ENCODE measurements at regions of chr10 and their contacts with region 1.

Region 1: DNA sequence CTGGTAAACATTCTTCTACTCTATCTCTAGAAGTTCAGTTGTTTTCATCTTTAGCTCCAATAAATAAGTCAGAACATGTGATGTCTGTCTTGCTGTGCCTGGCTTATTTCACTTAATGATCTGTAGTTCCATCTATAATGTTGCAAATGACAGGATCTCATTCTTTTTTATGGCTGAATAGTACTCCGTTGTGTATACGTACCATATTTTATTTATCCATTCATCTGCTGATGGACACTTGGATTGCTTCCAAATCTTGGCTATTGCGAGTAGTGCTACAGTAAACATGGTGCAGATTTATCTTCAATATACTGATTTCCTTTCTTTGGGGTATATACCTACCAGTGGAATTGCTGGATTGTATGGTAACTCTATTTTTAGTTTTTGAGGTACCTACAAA is 124.4 kb downstream of the ZNF33B start:
- DNase-seq: no peak
- ATAC-seq: no peak
- H3K4me3 Mint-ChIP-seq: no peak overlapping the region
- H3K27ac Mint-ChIP-seq: no peak overlapping the region
- H3K4me1 Mint-ChIP-seq: no peaks in the 10 kb centered on the region
- H3K27me3 Mint-ChIP-seq: no peaks in the 10 kb centered on the region

Region 2: GRCh38 chr10:42598249-42598873 is 84.4 kb after region 1 on chr10:
- CTCF ChIA-PET with region 1: no interaction called
- POLR2A ChIA-PET with region 1: no interaction called
- intact Hi-C with region 1: loop called in 1 of 2 experiments (anchors 5 kb)
- DNase-seq: no peak
- ATAC-seq: no peak
- H3K4me3 Mint-ChIP-seq: no peak overlapping the region
- H3K27ac Mint-ChIP-seq: no peak overlapping the region
- H3K4me1 Mint-ChIP-seq: no peaks in the 10 kb centered on the region
- H3K27me3 Mint-ChIP-seq: no peaks in the 10 kb centered on the region

Measured in activated CD4-positive, alpha-beta T cell treated with anti-CD3 and anti-CD28 coated beads for 36 hours (primary cell).